ENCODE measurements at regions of chr11 and their contacts with region 1.

Region 1: DNA sequence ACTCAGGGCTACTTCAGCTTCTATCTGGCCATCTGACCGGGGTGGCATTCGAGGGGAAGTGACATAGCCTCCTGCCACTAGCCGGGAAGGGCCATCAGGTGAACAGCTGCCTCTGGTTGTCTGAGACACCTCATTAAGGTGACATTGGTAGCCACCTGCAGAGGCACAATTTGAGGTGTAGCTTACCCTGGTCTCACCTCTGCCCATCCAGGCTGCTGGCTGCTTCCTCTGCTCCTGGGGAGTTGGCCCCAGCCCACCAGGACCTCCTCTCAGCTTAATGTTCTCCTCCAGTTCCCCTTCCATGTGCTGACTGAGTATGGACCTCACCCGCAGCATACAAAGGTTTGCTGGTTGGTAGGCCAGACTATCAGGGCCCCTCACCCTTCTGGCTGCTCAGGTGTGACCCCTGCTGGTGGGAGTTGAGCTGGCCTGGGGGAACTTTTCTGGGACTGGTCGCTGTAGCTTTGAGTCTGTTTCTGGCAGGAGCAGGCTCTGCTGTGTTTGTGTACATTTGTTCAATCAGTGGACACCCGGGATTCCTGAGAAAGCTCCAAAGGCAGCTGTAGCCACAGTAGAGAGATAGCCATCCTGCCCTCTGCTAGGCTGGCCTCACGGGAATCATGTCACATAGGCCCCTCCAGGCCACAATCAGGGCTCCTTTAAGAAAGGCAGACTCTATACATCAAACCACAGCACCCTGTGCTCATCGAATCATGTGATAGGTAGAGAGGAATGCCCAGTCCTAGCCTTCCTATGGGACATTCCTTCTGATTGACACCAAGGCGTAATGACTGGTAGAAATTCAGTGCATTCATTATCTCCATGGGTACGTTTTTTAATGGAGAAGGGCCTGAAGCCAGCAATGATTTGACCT is 295.1 kb upstream of the PLET1 start:
- DNase-seq: peak in 34 of 35 experiments; percentile 9 to 74 (median 52)
- ATAC-seq: peak; percentile 76 to 87 (median 79)
- H3K4me3 ChIP-seq: no peak overlapping the region
- H3K4me3 Mint-ChIP-seq: no peak overlapping the region
- H3K27ac ChIP-seq: no peak overlapping the region
- H3K27ac Mint-ChIP-seq: peak overlapping the region in 1 of 2 donors; percentile 65
- H3K4me1 ChIP-seq: peaks cover 0 to 4% of the 10 kb centered on the region in 2 experiments
- H3K4me1 Mint-ChIP-seq: peaks cover 2 to 6% (median 2%) of the 10 kb centered on the region in 3 donors
- H3K27me3 ChIP-seq: peaks cover 0 to 10% of the 10 kb centered on the region in 2 experiments
- H3K27me3 Mint-ChIP-seq: peaks cover 0 to 7% of the 10 kb centered on the region in 2 donors

Region 2: DNA sequence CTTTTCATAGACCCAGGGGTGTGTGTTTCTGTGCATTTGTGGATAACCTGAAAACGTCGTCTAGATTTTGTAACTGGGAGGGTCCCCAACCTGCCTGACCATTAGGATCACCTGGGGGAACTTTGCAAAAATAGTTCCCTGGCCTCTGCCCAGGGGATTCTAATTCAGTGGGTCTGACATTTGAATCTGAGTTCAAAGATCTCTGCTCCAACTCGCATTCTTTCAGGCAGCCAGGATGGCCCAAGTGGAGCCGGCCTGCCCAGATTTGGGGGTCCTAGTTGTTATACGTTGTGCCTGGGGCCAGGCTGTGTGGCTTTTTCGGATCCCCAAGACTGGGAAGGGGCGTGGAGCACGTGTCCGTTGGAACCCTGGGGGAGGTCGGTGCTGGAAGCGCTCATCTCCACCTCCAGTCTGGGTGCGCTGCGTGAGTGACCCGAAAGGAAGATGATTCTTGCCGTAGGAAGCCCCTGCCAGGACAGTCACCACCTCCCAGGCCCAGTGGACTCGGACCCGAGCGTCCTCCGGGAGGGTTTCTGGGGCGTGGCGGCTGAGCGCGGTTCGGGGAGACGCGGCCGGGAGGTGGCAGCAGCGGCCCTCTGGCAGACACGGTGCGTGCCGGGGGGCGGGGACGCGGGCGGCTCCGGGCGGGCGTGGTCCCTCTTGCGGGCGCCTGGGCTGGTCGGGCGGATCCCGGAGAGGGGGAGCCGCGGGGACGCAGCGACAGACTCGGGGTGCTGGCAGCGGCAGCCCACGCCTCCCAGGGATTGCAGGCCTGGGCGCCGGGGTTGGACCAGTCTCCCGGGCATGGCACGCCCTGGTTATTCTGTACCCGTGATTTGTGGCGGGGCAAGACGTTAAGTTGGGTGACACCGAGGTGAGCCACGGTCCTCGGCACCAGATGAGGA is 265.9 kb before region 1 on chr11:
- CTCF ChIA-PET with region 1: interaction called, 8 to 14 read pairs
- POLR2A ChIA-PET with region 1: no interaction called
- DNase-seq: peak; percentile 68 to 90 (median 79)
- ATAC-seq: peak; percentile 98 to 99 (median 99)
- H3K4me3 ChIP-seq: peak overlapping the region; percentile 53 to 72
- H3K4me3 Mint-ChIP-seq: peak overlapping the region; percentile 70 to 77 (median 75)
- H3K27ac ChIP-seq: peak overlapping the region; percentile 30
- H3K27ac Mint-ChIP-seq: peak overlapping the region; percentile 36 to 75
- H3K4me1 ChIP-seq: peaks cover 8 to 12% of the 10 kb centered on the region in 2 experiments
- H3K4me1 Mint-ChIP-seq: peaks cover 19 to 25% (median 20%) of the 10 kb centered on the region in 3 donors
- H3K27me3 ChIP-seq: peaks cover 0 to 6% of the 10 kb centered on the region in 2 experiments
- H3K27me3 Mint-ChIP-seq: peaks cover 0 to 3% of the 10 kb centered on the region in 2 donors

Region 3: DNA sequence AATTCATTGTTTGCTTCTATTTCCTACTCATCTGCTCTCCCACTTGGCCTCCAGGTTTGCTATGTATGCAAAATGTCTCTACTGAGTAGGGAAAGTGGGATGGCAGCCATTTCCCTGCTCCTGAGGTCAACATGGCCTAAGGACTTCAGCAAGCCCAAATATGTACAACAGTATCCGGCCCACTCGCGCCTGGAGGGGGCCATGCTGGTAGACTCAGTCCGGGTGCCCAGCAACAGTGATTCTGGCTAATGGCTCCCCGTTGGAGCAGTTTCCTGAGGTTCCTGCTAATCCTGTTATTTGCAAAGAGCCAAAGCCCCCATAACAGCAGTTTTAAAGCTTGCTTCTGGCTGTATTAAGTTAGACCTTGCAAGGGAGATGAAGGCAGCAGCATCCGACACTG is 152.0 kb after region 1 on chr11:
- CTCF ChIA-PET with region 1: no interaction called
- POLR2A ChIA-PET with region 1: no interaction called
- DNase-seq: no peak
- ATAC-seq: no peak
- H3K4me3 ChIP-seq: no peak overlapping the region
- H3K4me3 Mint-ChIP-seq: no peak overlapping the region
- H3K27ac ChIP-seq: no peak overlapping the region
- H3K27ac Mint-ChIP-seq: no peak overlapping the region
- H3K4me1 ChIP-seq: no peaks in the 10 kb centered on the region
- H3K4me1 Mint-ChIP-seq: no peaks in the 10 kb centered on the region
- H3K27me3 ChIP-seq: peaks cover 0 to 3% of the 10 kb centered on the region in 2 experiments
- H3K27me3 Mint-ChIP-seq: peaks cover 7 to 29% of the 10 kb centered on the region in 2 donors

Measured in T-cell (primary cell).